Mammary epithelial cell (primary cell): ENCODE measurements at regions of chr12 and their contacts with region 1.

Region 1: DNA sequence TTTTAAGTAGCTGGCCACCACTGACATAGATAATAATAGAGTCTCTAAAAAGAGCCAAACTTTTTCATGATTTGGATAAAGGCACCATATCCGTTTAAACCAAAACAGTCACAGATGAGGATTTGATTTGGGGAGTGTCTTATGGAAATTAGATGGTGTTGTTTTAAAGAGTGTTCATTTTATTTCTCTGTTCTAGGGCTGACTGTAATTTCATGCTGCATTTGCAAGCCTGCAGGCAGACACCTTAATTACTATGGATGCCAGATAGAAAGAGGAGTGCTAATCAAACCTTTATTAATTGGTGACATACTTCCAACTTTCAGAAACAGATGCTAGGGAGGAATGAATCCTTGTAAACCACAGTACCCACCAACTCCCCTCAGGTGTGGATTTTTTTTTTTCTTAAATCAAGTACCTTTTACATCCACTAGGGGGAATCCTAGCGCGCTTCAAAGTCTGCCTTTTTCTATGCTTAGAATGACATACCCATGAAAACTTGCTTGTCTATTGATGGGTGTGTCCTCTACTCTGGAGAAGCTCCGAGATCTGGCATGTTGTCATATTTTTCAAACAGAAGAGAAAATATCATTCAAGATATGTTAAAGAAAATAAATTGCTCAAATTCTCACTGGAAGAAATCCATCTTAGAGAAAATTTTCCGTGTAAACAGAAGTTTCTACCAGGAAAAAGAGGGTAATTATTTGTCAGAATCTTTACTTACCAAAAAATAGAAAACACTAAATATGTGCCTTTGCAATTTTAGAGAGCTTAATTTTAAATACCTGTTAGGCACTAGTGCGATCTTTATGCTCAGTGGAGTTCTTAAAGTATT is 14.2 kb upstream of the PLXNC1 start:
- DNase-seq: peak; percentile 36
- H3K4me3 ChIP-seq: no peak overlapping the region
- H3K27ac ChIP-seq: no peak overlapping the region
- H3K4me1 ChIP-seq: no peaks in the 10 kb centered on the region
- H3K27me3 ChIP-seq: no peaks in the 10 kb centered on the region
- CTCF ChIP-seq: peak; percentile 58 to 71

Region 2: DNA sequence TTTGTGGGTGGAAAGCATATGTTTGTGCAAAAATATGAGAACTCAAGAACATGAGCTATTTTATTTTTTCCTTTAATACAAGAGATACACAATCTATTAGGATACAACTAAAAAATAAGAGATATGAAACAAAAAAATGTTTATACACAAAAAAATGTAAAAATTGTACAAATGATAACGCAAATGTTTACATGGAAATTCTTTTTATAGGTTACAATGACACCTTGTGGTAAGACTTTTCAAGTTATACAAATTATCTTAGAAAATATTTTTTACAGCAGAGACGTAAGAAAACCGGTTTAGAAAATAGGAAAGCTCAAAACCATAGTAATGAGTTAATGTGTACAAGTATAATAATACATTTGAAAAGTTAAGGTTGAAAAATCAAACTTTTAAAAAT is 300.0 kb after region 1 on chr12:
- CTCF ChIA-PET with region 1: no interaction called
- dilution Hi-C with region 1: no loop called
- in situ Hi-C with region 1: no loop called
- intact Hi-C with region 1: loop called (anchors 5 kb)
- DNase-seq: no peak
- H3K4me3 ChIP-seq: no peak overlapping the region
- H3K27ac ChIP-seq: no peak overlapping the region
- H3K4me1 ChIP-seq: no peaks in the 10 kb centered on the region
- H3K27me3 ChIP-seq: no peaks in the 10 kb centered on the region
- CTCF ChIP-seq: no peak